Heart left ventricle (tissue), 16 donors: ENCODE measurements at regions of chr3 and their contacts with region 1.

Region 1: GRCh38 chr3:124829819-124830554 is 57.2 kb downstream of the ITGB5 start:
- DNase-seq: no peak
- ATAC-seq: peak; percentile 40 to 65 (median 59)
- H3K4me3 ChIP-seq: no peak overlapping the region
- H3K27ac ChIP-seq: peak overlapping the region; percentile 7 to 83 (median 64)
- H3K4me1 ChIP-seq: peaks cover 8 to 73% (median 53%) of the 10 kb centered on the region in 12 donors
- H3K27me3 ChIP-seq: no peaks in the 10 kb centered on the region
- CTCF ChIP-seq: no peak
- POLR2A ChIP-seq: no peak

Region 2: DNA sequence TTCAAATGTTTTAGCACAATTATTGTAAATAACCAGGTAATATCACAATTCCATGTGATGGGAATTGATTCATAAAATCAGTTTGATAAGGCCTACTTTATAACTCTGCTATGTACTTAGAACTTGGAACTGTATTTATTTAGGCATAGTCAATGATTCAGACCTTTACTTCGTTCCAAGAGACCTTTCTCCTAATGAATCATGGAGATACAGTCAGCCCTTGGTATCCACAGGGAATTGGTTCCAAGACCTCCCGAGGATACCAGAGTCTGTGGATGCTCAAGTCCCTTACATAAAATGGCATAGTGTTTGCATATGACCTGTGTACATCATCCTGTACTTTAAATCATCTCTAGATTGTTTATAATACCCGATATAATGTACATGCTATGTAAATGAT is 160.5 kb before region 1 on chr3:
- intact Hi-C with region 1: no loop called
- DNase-seq: no peak
- ATAC-seq: no peak
- H3K4me3 ChIP-seq: no peak overlapping the region
- H3K27ac ChIP-seq: no peak overlapping the region
- H3K4me1 ChIP-seq: peaks cover 0 to 21% (median 2%) of the 10 kb centered on the region in 12 donors
- H3K27me3 ChIP-seq: no peaks in the 10 kb centered on the region
- CTCF ChIP-seq: no peak
- POLR2A ChIP-seq: no peak

Region 3: DNA sequence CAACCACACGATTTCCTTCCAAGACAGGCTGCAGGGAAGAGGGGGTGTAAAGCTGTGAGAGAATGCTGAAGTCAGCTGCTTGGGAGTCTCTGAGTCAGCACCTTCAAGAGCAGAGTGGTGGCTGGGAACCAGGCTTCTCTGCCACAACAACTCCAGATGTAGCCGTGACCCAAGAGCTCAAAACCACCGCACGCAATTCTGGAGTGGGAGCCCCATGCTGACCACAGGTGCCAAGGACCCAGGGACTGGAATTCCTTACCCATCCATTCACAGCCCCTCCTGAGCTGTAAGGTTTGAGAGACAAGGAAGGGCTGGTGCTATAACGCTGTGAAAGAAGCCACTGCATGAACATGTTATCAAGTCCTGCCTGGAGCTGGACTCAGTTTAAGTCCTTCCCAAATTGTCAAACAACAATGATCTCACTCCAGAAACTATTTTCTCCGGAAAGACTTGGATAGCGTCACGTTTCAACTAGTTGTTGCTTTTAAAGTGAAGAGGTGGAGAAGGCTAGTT is 38.3 kb before region 1 on chr3:
- intact Hi-C with region 1: loop called in 4 of 10 experiments (anchors 2 to 10 kb)
- DNase-seq: peak in 4 of 5 donors; percentile 39 to 66 (median 58)
- ATAC-seq: peak; percentile 37 to 72 (median 70)
- H3K4me3 ChIP-seq: no peak overlapping the region
- H3K27ac ChIP-seq: peak overlapping the region in 11 of 12 donors; percentile 24 to 85 (median 64)
- H3K4me1 ChIP-seq: peaks cover 9 to 61% (median 54%) of the 10 kb centered on the region in 12 donors
- H3K27me3 ChIP-seq: no peaks in the 10 kb centered on the region
- CTCF ChIP-seq: no peak
- POLR2A ChIP-seq: no peak

Region 4: DNA sequence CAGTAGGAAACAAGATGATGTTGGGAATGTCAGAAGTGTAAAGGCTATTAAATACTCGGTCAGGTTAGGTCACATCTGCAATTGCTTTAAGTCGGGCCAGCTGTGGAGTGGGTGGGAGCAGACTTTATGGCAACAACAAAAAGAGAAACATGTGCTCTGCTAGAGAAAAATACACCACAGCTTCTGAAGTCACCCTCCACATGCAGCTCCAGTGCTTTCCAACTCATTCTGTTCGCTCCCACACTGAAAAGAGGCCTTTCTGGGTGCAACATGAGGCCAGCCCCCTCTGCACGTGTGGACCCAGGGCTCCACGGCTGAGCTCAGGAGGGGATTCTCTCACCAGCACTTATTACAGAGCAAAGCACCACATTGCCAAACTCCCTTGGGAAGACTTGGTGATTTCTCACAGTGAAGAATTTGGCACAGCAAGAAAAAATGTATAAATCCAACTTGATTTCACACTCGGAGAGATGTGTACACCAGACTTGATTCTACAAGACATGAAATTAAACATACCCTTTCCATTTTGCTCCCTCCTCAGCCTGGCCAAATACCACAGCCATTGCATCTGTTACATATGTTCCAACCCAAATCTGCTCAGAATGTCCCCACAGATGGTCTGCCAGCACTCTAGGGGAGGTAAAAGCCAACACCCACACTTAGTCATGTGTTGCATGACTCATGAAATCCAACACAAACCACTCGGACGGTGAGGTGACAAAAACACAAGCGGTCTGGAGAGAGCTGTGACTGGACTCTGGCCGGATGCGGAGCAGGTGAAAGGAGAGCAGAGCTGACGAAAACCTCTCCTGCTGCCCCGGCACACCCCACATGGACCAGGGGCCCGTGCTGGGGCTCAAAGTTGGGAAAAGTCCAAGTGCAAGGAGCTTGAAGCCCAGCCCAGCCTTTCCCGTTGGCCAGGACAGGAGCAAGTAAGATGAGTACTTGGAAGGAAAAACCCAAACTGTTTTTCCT is 17.4 kb before region 1 on chr3:
- intact Hi-C with region 1: no loop called
- DNase-seq: peak; percentile 71 to 83 (median 74)
- ATAC-seq: peak; percentile 83 to 91 (median 88)
- H3K4me3 ChIP-seq: no peak overlapping the region
- H3K27ac ChIP-seq: peak overlapping the region; percentile 16 to 93 (median 80)
- H3K4me1 ChIP-seq: peaks cover 0 to 67% (median 38%) of the 10 kb centered on the region in 12 donors
- H3K27me3 ChIP-seq: no peaks in the 10 kb centered on the region
- CTCF ChIP-seq: no peak
- POLR2A ChIP-seq: peak in 1 of 2 donors; percentile 26